Transverse colon (tissue), 4 donors: ENCODE measurements at regions of chrX and their contacts with region 1.

Region 1: DNA sequence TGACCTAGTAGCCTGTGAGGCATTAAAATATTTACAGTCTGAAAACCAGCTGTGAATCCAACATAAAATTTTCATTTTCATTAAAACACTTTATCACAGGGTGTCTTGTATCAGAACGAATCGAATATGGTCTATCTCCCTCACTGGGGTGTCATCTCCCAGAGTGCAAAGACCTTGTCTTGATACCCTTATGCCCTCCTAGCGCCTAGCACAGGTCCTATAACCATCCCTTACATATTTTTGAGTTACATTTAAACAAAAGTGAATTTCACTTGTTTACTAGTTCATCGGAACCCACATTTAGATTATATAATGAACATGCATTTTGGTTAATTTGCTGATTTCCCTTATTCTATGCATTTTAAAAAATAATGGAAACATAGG is 14.0 kb downstream of the DIPK2B start:
- DNase-seq: no peak
- H3K4me3 ChIP-seq: peak overlapping the region in 1 of 4 donors; percentile 28
- H3K27ac ChIP-seq: peak overlapping the region in 1 of 4 donors; percentile 65
- H3K4me1 ChIP-seq: no peaks in the 10 kb centered on the region
- H3K27me3 ChIP-seq: no peaks in the 10 kb centered on the region
- CTCF ChIP-seq: no peak
- EP300 ChIP-seq: no peak
- POLR2A ChIP-seq: no peak

Region 2: DNA sequence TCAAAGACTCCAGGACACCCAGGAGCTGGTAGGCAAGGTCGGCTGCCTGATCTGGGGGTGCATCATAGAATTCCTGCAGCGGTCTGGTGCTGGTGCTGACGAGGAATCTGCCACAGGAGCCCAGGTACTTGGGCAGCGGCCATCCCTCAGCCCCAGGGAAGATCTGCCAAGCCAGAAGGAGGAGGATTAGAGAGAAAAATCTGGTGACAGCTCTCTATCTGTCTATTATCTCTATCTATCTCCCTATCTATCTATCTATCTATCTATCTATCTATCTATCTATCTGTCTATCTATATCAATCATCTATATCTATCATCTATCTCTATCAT is 32.6 kb before region 1 on chrX:
- in situ Hi-C with region 1: no loop called
- intact Hi-C with region 1: loop called (anchors 1 kb)
- DNase-seq: no peak
- H3K4me3 ChIP-seq: no peak overlapping the region
- H3K27ac ChIP-seq: no peak overlapping the region
- H3K4me1 ChIP-seq: no peaks in the 10 kb centered on the region
- H3K27me3 ChIP-seq: no peaks in the 10 kb centered on the region
- CTCF ChIP-seq: no peak
- EP300 ChIP-seq: no peak
- POLR2A ChIP-seq: no peak